ENCODE measurements at regions of chr3 and their contacts with region 1.

Region 1: GRCh38 chr3:10263646-10264363 is 15.5 kb downstream of the TATDN2 start:
- DNase-seq: peak; percentile 82
- H3K4me3 Mint-ChIP-seq: peak overlapping the region; percentile 71
- H3K27ac Mint-ChIP-seq: peak overlapping the region; percentile 83
- H3K4me1 Mint-ChIP-seq: peaks cover 85% of the 10 kb centered on the region
- H3K27me3 Mint-ChIP-seq: no peaks in the 10 kb centered on the region

Region 2: DNA sequence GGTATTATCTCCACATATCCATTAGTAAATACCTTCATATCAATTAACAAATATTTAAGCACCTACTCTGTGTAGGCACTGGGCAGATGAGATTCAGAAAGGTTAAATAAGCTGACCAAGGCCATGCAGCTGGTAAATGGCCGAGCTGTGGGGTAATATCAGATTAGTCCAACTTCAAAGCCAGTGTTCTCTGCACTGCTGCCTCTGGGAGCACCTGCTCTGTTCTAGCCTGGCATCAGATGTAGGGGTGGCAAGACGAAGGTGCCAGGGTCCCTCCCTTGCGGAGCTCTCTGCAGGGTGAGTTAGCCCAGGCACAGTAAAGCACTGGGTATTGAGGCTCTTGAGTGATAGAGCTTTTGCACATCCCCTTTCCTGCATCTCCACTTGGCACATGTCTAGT is 10.1 kb before region 1 on chr3:
- CTCF ChIA-PET with region 1: interaction called, 14 read pairs
- POLR2A ChIA-PET with region 1: interaction called, 9 read pairs
- intact Hi-C with region 1: loop called (anchors 1 kb)
- DNase-seq: no peak
- H3K4me3 Mint-ChIP-seq: no peak overlapping the region
- H3K27ac Mint-ChIP-seq: peak overlapping the region; percentile 13
- H3K4me1 Mint-ChIP-seq: peaks cover 67% of the 10 kb centered on the region
- H3K27me3 Mint-ChIP-seq: no peaks in the 10 kb centered on the region

Region 3: DNA sequence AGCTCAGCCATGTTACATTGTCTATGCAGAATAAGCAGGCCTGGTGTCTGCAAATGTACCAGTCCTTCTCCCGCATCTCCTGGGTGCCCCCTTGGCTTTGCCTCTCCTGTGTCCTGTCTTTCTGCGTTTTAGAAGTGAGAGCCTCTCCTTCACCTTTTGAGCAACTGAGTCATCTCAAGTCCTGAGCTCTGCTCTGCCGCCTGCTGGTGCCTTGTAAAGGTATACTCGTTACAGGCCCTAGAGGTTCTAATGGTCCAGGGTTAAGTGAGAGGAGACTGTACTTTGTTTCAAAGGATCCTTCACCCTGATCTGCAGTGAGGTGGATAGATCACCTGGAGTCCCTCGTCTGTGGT is 16.3 kb after region 1 on chr3:
- CTCF ChIA-PET with region 1: interaction called, 29 read pairs
- POLR2A ChIA-PET with region 1: interaction called, 6 read pairs
- intact Hi-C with region 1: loop called (anchors 2 kb)
- DNase-seq: peak; percentile 41
- H3K4me3 Mint-ChIP-seq: no peak overlapping the region
- H3K27ac Mint-ChIP-seq: peak overlapping the region; percentile 3
- H3K4me1 Mint-ChIP-seq: peaks cover 71% of the 10 kb centered on the region
- H3K27me3 Mint-ChIP-seq: no peaks in the 10 kb centered on the region

Region 4: GRCh38 chr3:10286596-10287330 is 23.0 kb after region 1 on chr3:
- CTCF ChIA-PET with region 1: interaction called, 29 read pairs
- POLR2A ChIA-PET with region 1: interaction called, 6 read pairs
- intact Hi-C with region 1: loop called (anchors 2 kb)
- DNase-seq: peak; percentile 43
- H3K4me3 Mint-ChIP-seq: no peak overlapping the region
- H3K27ac Mint-ChIP-seq: peak overlapping the region; percentile 18
- H3K4me1 Mint-ChIP-seq: peaks cover 45% of the 10 kb centered on the region
- H3K27me3 Mint-ChIP-seq: no peaks in the 10 kb centered on the region

Region 5: GRCh38 chr3:10495002-10495401 is 231.2 kb after region 1 on chr3:
- CTCF ChIA-PET with region 1: no interaction called
- POLR2A ChIA-PET with region 1: no interaction called
- intact Hi-C with region 1: no loop called
- DNase-seq: no peak
- H3K4me3 Mint-ChIP-seq: no peak overlapping the region
- H3K27ac Mint-ChIP-seq: no peak overlapping the region
- H3K4me1 Mint-ChIP-seq: no peaks in the 10 kb centered on the region
- H3K27me3 Mint-ChIP-seq: no peaks in the 10 kb centered on the region